WTC11 (cell line): ENCODE measurements at regions of chr1 and their contacts with region 1.

Region 1: GRCh38 chr1:37989361-37989930 is 376 bp downstream of the SF3A3 start:
- DNase-seq: no peak
- ATAC-seq: peak; percentile 7
- H3K4me3 Mint-ChIP-seq: peak overlapping the region; percentile 87
- H3K27ac Mint-ChIP-seq: peak overlapping the region; percentile 53
- H3K4me1 Mint-ChIP-seq: peaks cover 12% of the 10 kb centered on the region
- H3K27me3 Mint-ChIP-seq: no peaks in the 10 kb centered on the region
- CTCF ChIP-seq: no peak

Region 2: DNA sequence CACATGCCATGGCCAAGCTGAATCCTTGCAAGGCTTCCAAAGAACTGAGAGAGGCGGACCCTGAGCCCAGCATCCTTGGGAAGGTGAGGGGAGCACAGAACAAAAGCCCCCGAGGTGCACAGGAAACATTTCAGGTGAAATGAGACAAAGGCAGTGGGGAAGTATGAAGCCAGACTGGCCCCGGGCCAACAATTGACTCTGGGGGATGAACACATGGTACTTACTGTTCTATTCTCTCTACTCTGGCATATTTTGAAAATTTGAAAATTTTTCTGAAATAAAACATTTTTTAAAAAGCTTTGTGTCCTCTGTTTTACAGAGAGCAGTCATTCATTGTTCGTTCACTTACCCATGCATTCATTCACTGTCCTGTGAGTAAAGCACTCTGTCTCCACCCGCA is 1032.9 kb before region 1 on chr1:
- CTCF ChIA-PET with region 1: no interaction called
- POLR2A ChIA-PET with region 1: no interaction called
- DNase-seq: no peak
- ATAC-seq: no peak
- H3K4me3 Mint-ChIP-seq: no peak overlapping the region
- H3K27ac Mint-ChIP-seq: no peak overlapping the region
- H3K4me1 Mint-ChIP-seq: no peaks in the 10 kb centered on the region
- H3K27me3 Mint-ChIP-seq: no peaks in the 10 kb centered on the region
- CTCF ChIP-seq: no peak

Region 3: DNA sequence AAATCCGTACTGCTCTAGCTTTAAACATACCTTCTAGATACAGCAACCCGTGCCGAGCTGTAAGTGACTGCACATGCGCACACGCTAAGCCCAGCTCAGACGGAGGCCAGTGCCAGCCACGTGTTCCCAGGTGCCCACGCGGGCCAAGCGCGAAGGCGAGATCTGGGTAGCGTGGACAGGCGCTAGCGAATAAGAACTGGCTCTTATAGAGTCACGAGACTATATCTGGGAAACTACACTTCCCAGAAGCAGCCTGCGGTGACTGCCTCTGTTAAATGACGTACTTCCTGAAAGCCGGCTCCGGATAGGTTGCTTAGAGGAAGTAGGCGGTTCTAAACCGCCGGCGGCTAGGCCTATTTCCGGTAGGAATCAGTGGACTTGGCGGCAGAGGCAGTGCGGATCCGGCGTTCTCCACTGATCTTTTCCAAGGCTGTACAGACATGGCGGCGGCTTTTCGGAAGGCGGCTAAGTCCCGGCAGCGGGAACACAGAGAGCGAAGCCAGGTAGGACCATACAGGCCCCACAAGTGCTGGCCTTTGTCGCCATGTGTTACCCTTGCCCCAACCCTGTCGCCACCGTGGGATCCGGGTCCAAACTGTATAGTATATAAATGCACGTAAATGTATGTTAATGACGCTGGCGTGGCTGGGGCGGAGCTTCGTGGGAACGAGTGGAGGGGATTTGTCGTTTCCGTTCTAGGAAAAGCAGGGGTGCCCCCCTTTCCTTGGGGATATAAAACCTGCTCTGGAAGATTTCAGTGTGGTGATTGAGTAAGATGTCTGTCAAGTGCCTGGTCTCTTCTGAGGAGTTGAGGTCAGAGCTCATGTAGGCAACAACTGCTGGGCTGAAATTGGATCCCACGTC is 23.1 kb after region 1 on chr1 and contains the start of gene UTP11:
- CTCF ChIA-PET with region 1: interaction called, 13 read pairs
- POLR2A ChIA-PET with region 1: interaction called, 4 read pairs
- DNase-seq: peak; percentile 93
- ATAC-seq: peak; percentile 92
- H3K4me3 Mint-ChIP-seq: peak within 1 kb of the TSS; percentile 95
- H3K27ac Mint-ChIP-seq: peak within 1 kb of the TSS; percentile 94
- H3K4me1 Mint-ChIP-seq: peaks cover 21% of the 10 kb centered on the region
- H3K27me3 Mint-ChIP-seq: peaks cover 9% of the 10 kb centered on the region
- CTCF ChIP-seq: no peak
- total RNA-seq, gene UTP11: 41.3 to 42.6 TPM (median 42.2 TPM) in 3 replicates

Region 4: DNA sequence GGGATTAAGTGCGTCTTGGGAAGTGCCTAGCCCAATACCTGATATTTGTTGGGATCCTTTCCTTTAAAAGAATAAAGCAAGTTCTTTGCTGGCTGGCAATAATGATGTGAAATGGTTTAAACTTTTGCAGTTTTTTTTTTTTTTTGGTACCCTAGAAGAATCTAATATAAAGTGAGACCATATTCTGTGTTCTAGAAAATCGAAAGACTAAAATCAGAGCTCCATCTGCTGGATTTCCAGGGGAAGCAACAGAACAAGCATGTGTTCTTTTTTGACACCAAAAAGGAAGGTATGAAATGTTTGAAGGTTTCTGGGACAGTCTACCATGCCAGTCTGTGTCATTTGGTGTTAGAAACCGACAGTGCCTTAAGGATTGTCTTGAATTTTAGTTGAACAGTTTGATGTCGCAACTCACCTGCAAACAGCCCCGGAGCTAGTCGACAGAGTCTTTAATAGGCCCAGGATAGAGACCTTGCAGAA is 29.5 kb after region 1 on chr1:
- CTCF ChIA-PET with region 1: interaction called, 13 read pairs
- POLR2A ChIA-PET with region 1: interaction called, 3 read pairs
- DNase-seq: no peak
- ATAC-seq: no peak; the same call in 1 of the 2 replicates
- H3K4me3 Mint-ChIP-seq: no peak overlapping the region
- H3K27ac Mint-ChIP-seq: no peak overlapping the region
- H3K4me1 Mint-ChIP-seq: peaks cover 3% of the 10 kb centered on the region
- H3K27me3 Mint-ChIP-seq: no peaks in the 10 kb centered on the region
- CTCF ChIP-seq: no peak